Tibial artery (tissue), 4 donors: ENCODE measurements at regions of chr5 and their contacts with region 1.

Region 1: GRCh38 chr5:55691265-55692105 is 20.6 kb downstream of the SLC38A9 start:
- DNase-seq: no peak
- H3K4me3 ChIP-seq: peak overlapping the region in 1 of 2 donors; percentile 13
- H3K27ac ChIP-seq: peak overlapping the region; percentile 8 to 59
- H3K4me1 ChIP-seq: peaks cover 0 to 21% (median 7%) of the 10 kb centered on the region in 4 donors
- H3K27me3 ChIP-seq: no peaks in the 10 kb centered on the region
- CTCF ChIP-seq: peak; percentile 59 to 81

Region 2: GRCh38 chr5:55324815-55325418 is 366.6 kb before region 1 on chr5:
- intact Hi-C with region 1: loop called (anchors 5 kb)
- DNase-seq: no peak
- H3K4me3 ChIP-seq: no peak overlapping the region
- H3K27ac ChIP-seq: no peak overlapping the region
- H3K4me1 ChIP-seq: peaks cover 0 to 59% (median 2%) of the 10 kb centered on the region in 4 donors
- H3K27me3 ChIP-seq: no peaks in the 10 kb centered on the region
- CTCF ChIP-seq: peak; percentile 70 to 77

Region 3: GRCh38 chr5:55344392-55344992 is 347.0 kb before region 1 on chr5:
- intact Hi-C with region 1: loop called (anchors 5 kb)
- DNase-seq: peak; percentile 71 to 81
- H3K4me3 ChIP-seq: no peak overlapping the region
- H3K27ac ChIP-seq: peak overlapping the region; percentile 70 to 73
- H3K4me1 ChIP-seq: peaks cover 0 to 26% (median 7%) of the 10 kb centered on the region in 4 donors
- H3K27me3 ChIP-seq: no peaks in the 10 kb centered on the region
- CTCF ChIP-seq: peak; percentile 81

Region 4: GRCh38 chr5:55407059-55407684 is 284.3 kb before region 1 on chr5:
- intact Hi-C with region 1: loop called (anchors 5 kb)
- DNase-seq: no peak
- H3K4me3 ChIP-seq: no peak overlapping the region
- H3K27ac ChIP-seq: peak overlapping the region in 1 of 2 donors; percentile 25
- H3K4me1 ChIP-seq: peaks cover 0 to 14% (median 0%) of the 10 kb centered on the region in 4 donors
- H3K27me3 ChIP-seq: no peaks in the 10 kb centered on the region
- CTCF ChIP-seq: peak; percentile 67 to 73

Region 5: DNA sequence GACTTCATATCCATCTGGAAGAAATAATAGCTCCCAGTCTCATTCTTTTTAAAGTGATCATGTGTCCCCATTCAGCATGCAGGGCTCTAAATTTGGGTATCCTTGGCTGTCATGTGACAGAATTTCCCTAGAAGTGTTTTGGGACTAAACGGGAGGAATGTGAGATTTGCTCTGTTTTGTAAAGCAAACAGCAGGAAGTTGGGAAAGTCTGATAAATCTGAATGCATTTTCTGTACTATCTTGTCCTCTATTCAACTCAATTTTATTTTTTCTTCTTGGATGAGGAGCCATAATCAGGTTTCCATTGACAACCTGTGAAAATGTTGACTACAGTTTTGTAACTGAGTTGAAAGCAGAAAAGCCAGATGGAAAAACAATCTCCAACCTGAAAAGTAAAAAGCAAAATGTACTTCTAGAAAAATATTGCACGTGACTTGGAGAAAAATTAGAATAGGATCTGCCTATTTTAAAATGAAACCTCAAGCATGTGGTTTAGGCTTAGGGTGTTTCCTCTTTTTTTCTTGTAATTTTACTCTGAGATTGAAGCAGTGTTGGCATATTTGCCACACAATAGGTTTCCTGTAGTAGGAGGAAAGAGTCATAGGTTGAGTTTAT is 379.5 kb after region 1 on chr5:
- intact Hi-C with region 1: no loop called
- DNase-seq: no peak
- H3K4me3 ChIP-seq: no peak overlapping the region
- H3K27ac ChIP-seq: peak overlapping the region in 1 of 2 donors; percentile 18
- H3K4me1 ChIP-seq: peaks cover 0 to 21% (median 16%) of the 10 kb centered on the region in 4 donors
- H3K27me3 ChIP-seq: no peaks in the 10 kb centered on the region
- CTCF ChIP-seq: no peak